HEK293 (cell line): ENCODE measurements at regions of chr9 and their contacts with region 1.

Region 1: DNA sequence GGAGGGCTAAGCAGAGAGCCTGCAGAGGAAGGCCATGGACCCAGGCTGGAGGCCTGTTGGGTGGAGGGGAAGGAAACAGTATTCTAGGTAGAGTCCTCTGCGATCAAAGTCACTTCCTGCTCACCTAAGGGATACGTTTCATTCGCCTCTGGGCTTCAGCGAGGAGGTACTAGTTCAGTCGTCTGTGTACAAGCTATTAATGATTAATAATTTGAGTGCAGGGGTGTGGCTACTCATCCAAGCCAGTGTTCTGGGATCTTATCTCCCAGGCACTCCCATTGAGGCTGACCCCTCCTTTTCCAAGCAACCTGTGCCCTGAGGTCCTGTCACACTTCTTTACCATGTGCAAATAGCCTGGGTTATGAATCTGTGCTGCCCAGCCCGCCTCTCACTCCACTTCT is 25.2 kb downstream of the RALGPS1 start:
- H3K4me3 ChIP-seq: no peak overlapping the region
- H3K27ac ChIP-seq: no peak overlapping the region
- H3K4me1 ChIP-seq: no peaks in the 10 kb centered on the region
- CTCF ChIP-seq: no peak

Region 2: GRCh38 chr9:126956917-126957686 is 17.3 kb after region 1 on chr9:
- CTCF ChIA-PET with region 1: interaction called, 26 read pairs
- POLR2A ChIA-PET with region 1: interaction called, 3 read pairs
- H3K4me3 ChIP-seq: no peak overlapping the region
- H3K27ac ChIP-seq: no peak overlapping the region
- H3K4me1 ChIP-seq: peaks cover 3% of the 10 kb centered on the region; the same call in 1 of the 2 replicates
- CTCF ChIP-seq: no peak

Region 3: GRCh38 chr9:126965541-126966428 is 26.0 kb after region 1 on chr9:
- CTCF ChIA-PET with region 1: interaction called, 14 read pairs
- POLR2A ChIA-PET with region 1: no interaction called
- H3K4me3 ChIP-seq: no peak overlapping the region
- H3K27ac ChIP-seq: no peak overlapping the region
- H3K4me1 ChIP-seq: no peaks in the 10 kb centered on the region
- CTCF ChIP-seq: peak; percentile 49

Region 4: GRCh38 chr9:127199001-127199791 is 259.4 kb after region 1 on chr9:
- CTCF ChIA-PET with region 1: interaction called, 188 read pairs
- POLR2A ChIA-PET with region 1: no interaction called
- H3K4me3 ChIP-seq: no peak overlapping the region
- H3K27ac ChIP-seq: no peak overlapping the region
- H3K4me1 ChIP-seq: no peaks in the 10 kb centered on the region
- CTCF ChIP-seq: peak; percentile 72

Region 5: GRCh38 chr9:127214421-127215267 is 274.8 kb after region 1 on chr9:
- CTCF ChIA-PET with region 1: interaction called, 13 read pairs
- POLR2A ChIA-PET with region 1: no interaction called
- H3K4me3 ChIP-seq: no peak overlapping the region
- H3K27ac ChIP-seq: no peak overlapping the region
- H3K4me1 ChIP-seq: no peaks in the 10 kb centered on the region
- CTCF ChIP-seq: peak; percentile 32; the same call in 1 of the 2 replicates